ENCODE measurements at regions of chr6 and their contacts with region 1.

Region 1: DNA sequence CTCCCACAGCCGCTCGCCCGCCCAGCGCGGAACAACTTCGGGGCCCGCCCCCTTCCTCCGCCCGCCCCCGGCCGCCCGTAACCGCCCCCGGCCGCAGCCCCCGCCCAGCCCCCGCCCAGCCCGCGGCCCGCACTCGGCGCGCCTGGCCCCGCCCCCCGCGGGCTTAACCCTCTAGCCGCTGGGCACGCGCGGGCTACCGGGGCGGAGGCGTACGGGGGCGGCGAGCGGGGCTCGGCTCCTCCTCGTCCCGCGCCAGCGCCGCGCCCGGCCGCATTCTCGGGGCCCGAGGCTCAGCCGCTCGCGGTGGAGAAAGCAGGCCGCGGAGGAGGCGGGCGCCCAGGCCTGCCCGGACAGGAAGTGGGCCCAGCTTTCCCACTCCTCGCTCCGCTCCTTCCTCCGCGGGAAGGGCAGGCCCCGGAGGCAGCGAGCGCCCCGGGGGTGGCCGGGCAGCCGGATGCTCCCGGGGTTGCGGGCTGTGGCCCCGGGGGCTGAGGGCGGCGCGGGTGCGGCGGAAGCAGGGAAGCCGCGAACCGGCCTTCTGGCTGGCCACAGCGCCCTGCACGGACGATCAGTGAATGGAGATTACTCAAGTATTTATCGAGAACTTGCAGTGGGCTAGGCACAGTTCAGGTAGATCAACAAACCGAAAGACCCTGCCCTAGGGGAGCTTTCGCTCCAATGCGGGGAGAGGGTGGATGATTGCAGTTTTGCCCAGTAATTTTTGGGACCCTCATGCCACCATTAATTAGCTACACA is at the start of gene TRAM2:
- DNase-seq: peak; percentile 88
- ATAC-seq: peak; percentile 85
- H3K4me3 Mint-ChIP-seq: peak within 1 kb of the TSS; percentile 87
- H3K27ac Mint-ChIP-seq: peak within 1 kb of the TSS; percentile 83
- H3K4me1 Mint-ChIP-seq: peaks cover 46% of the 10 kb centered on the region
- H3K27me3 Mint-ChIP-seq: no peaks in the 10 kb centered on the region
- CTCF ChIP-seq: no peak
- total RNA-seq, gene TRAM2: 9.1 and 9.9 TPM in 2 replicates

Region 2: GRCh38 chr6:52361945-52362442 is 215.2 kb before region 1 on chr6 and contains the start of gene PAQR8:
- CTCF ChIA-PET with region 1: no interaction called
- POLR2A ChIA-PET with region 1: interaction called, 5 read pairs
- intact Hi-C with region 1: loop called (anchors 2 kb)
- DNase-seq: peak; percentile 86
- ATAC-seq: peak; percentile 93
- H3K4me3 Mint-ChIP-seq: peak within 1 kb of the TSS; percentile 97
- H3K27ac Mint-ChIP-seq: peak within 1 kb of the TSS; percentile 86
- H3K4me1 Mint-ChIP-seq: peaks cover 25% of the 10 kb centered on the region
- H3K27me3 Mint-ChIP-seq: no peaks in the 10 kb centered on the region
- CTCF ChIP-seq: no peak
- total RNA-seq, gene PAQR8: 6.8 and 8.0 TPM in 2 replicates

Region 3: GRCh38 chr6:52497652-52498408 is 79.4 kb before region 1 on chr6:
- CTCF ChIA-PET with region 1: interaction called, 3 read pairs
- POLR2A ChIA-PET with region 1: interaction called, 4 read pairs
- intact Hi-C with region 1: loop called (anchors 2 kb)
- DNase-seq: peak; percentile 37
- ATAC-seq: peak; percentile 77
- H3K4me3 Mint-ChIP-seq: peak overlapping the region; percentile 60
- H3K27ac Mint-ChIP-seq: peak overlapping the region; percentile 98
- H3K4me1 Mint-ChIP-seq: peaks cover 66% of the 10 kb centered on the region
- H3K27me3 Mint-ChIP-seq: no peaks in the 10 kb centered on the region
- CTCF ChIP-seq: no peak

Region 4: GRCh38 chr6:52551401-52552277 is 25.6 kb before region 1 on chr6:
- CTCF ChIA-PET with region 1: interaction called, 5 read pairs
- POLR2A ChIA-PET with region 1: no interaction called
- intact Hi-C with region 1: loop called (anchors 2 kb)
- DNase-seq: no peak
- ATAC-seq: no peak
- H3K4me3 Mint-ChIP-seq: peak overlapping the region; percentile 42
- H3K27ac Mint-ChIP-seq: peak overlapping the region; percentile 70
- H3K4me1 Mint-ChIP-seq: peaks cover 46% of the 10 kb centered on the region
- H3K27me3 Mint-ChIP-seq: no peaks in the 10 kb centered on the region
- CTCF ChIP-seq: no peak

Region 5: DNA sequence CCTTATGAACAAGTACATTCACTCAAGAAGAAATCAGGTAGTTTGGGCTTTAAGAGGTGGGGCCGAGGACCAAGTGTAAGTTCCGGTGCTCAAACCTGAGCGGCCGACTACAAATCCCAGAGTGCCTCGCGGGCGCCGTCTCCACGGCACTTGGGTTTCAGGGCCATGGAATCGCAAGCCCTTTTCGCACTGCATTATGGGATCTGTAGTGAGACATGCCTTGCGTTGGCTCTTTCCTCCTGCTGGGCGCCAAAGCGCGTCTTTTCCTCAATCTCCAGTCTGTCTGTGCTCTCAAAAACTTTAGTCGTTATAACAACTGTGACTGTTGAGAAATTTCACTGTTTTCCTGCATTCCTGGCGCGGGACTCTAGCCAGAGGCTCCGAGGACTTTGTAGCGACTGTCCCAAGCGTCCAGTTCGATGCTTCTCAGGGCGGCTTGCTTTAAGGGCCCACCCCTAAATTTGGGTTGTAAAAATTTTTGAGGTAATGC is 487.6 kb after region 1 on chr6:
- CTCF ChIA-PET with region 1: no interaction called
- POLR2A ChIA-PET with region 1: no interaction called
- intact Hi-C with region 1: loop called (anchors 1 kb)
- DNase-seq: peak; percentile 82
- ATAC-seq: peak; percentile 81
- H3K4me3 Mint-ChIP-seq: peak overlapping the region; percentile 100
- H3K27ac Mint-ChIP-seq: peak overlapping the region; percentile 99
- H3K4me1 Mint-ChIP-seq: peaks cover 57% of the 10 kb centered on the region
- H3K27me3 Mint-ChIP-seq: no peaks in the 10 kb centered on the region
- CTCF ChIP-seq: no peak

Region 6: GRCh38 chr6:53544470-53545308 is 967.5 kb after region 1 on chr6 and contains the start of gene GCLC:
- CTCF ChIA-PET with region 1: no interaction called
- POLR2A ChIA-PET with region 1: no interaction called
- intact Hi-C with region 1: loop called (anchors 1 kb)
- DNase-seq: peak; percentile 87
- ATAC-seq: peak; percentile 71
- H3K4me3 Mint-ChIP-seq: peak within 1 kb of the TSS; percentile 93
- H3K27ac Mint-ChIP-seq: peak within 1 kb of the TSS; percentile 91
- H3K4me1 Mint-ChIP-seq: peaks cover 67% of the 10 kb centered on the region
- H3K27me3 Mint-ChIP-seq: no peaks in the 10 kb centered on the region
- CTCF ChIP-seq: peak; percentile 37
- total RNA-seq, gene GCLC: 26.6 and 27.1 TPM in 2 replicates

Region 7: GRCh38 chr6:53794720-53795253 is 1217.6 kb after region 1 on chr6 and contains the start of gene LRRC1:
- CTCF ChIA-PET with region 1: no interaction called
- POLR2A ChIA-PET with region 1: no interaction called
- intact Hi-C with region 1: loop called (anchors 2 kb)
- DNase-seq: peak; percentile 94
- ATAC-seq: peak; percentile 76
- H3K4me3 Mint-ChIP-seq: peak within 1 kb of the TSS; percentile 99
- H3K27ac Mint-ChIP-seq: peak within 1 kb of the TSS; percentile 91
- H3K4me1 Mint-ChIP-seq: peaks cover 27% of the 10 kb centered on the region
- H3K27me3 Mint-ChIP-seq: peaks cover 2% of the 10 kb centered on the region
- CTCF ChIP-seq: no peak
- total RNA-seq, gene LRRC1: 3.0 and 4.7 TPM in 2 replicates